Activated CD4-positive, alpha-beta T cell treated with anti-CD3 and anti-CD28 coated beads for 36 hours (primary cell): ENCODE measurements at regions of chr1 and their contacts with region 1.

Region 1: DNA sequence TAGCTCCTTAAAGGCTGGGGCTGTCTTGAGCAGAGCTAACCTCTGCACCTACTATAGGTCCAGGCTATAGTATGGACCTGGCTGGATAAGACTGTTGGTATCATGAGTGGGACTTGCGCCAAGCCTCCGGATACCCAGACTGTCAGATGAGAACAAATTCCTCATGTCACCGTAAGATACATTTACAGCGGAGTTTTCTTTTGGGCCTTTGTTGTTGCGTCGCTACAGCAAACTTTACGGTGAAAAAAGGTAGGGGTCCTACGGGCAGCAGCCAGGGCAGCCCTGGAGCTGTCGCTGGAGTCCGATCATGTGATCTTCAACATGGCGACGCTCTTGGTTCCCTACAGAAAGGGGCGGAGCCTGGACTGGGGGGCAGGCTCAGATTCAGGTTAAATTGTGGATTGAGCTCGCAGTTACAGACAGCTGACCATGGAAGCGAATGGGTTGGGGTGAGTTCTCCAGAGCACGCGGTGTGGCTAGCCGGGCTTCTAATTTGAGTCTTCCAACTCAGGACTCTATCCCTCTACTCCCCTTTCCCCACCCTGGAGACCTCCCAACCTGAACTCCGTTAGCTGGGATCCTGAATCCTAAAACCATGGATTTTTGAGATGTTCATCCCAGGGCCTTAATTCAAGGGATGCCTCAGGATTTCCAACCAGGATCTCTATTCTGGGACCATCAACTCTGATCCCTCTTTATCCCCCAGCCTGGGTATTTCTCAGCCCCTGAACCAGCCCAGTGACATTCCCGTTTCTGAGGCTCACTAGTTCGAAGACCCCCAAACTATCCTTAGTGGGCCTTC is at the start of gene UROD:
- DNase-seq: peak; percentile 96
- ATAC-seq: peak; percentile 80
- H3K4me3 Mint-ChIP-seq: peak within 1 kb of the TSS; percentile 74
- H3K27ac Mint-ChIP-seq: peak within 1 kb of the TSS; percentile 97
- H3K4me1 Mint-ChIP-seq: peaks cover 36% of the 10 kb centered on the region
- H3K27me3 Mint-ChIP-seq: no peaks in the 10 kb centered on the region
- total RNA-seq, gene UROD: 123 to 134 TPM

Region 2: GRCh38 chr1:44721485-44722361 is 290.3 kb before region 1 on chr1:
- CTCF ChIA-PET with region 1: no interaction called
- POLR2A ChIA-PET with region 1: interaction called, 26 read pairs
- intact Hi-C with region 1: no loop called
- DNase-seq: peak; percentile 89
- ATAC-seq: peak; percentile 85
- H3K4me3 Mint-ChIP-seq: peak overlapping the region; percentile 66
- H3K27ac Mint-ChIP-seq: peak overlapping the region; percentile 96
- H3K4me1 Mint-ChIP-seq: peaks cover 80% of the 10 kb centered on the region
- H3K27me3 Mint-ChIP-seq: no peaks in the 10 kb centered on the region

Region 3: GRCh38 chr1:44775078-44775929 is 236.7 kb before region 1 on chr1 and contains the start of gene RPS8:
- CTCF ChIA-PET with region 1: no interaction called
- POLR2A ChIA-PET with region 1: interaction called, 4 read pairs
- intact Hi-C with region 1: loop called in 1 of 2 experiments (anchors 1 kb)
- DNase-seq: peak; percentile 94
- ATAC-seq: peak; percentile 84
- H3K4me3 Mint-ChIP-seq: peak within 1 kb of the TSS; percentile 96
- H3K27ac Mint-ChIP-seq: peak within 1 kb of the TSS; percentile 100
- H3K4me1 Mint-ChIP-seq: peaks cover 33% of the 10 kb centered on the region
- H3K27me3 Mint-ChIP-seq: no peaks in the 10 kb centered on the region
- total RNA-seq, gene RPS8: 3,005 to 3,275 TPM

Region 4: DNA sequence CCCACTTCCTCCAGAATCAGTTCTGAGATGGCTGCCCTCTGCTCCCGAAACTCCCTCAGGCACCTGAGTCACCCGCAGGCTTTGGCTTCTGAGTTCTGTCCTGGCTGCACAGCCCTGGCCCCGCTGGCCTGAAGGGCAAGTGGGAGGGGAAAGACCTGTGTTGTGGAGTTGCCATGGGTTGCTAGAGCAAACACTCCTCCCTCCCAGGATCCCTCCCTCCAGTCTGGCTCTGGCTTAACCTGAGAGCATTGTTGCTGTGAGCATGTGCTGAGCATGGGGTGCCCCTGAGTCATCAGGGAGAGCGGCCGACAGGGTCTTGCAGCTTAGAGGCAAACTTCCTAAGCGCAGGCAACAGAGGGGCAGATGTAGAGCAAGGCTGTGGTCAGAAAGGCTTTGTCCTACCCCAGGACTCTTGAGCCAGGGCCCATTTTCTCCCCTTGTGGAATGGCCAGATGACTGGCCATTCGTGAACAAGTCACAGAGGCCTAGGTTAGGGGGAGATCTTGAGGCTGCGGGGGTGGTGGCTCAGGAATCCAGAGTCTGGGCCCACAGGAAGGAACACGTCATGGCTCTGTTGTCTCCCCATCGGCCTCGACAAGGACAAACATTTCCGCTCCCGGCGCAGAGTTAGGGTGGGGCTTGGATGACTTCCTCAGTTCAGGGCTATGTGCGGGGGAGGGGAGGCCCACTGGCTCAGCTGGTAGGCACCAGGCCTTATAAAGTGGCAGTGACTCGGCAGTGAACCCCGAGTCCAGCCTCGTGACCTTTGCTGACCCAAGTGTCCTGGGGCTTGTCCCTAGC is 204.6 kb before region 1 on chr1 and contains the start of gene DYNLT4:
- CTCF ChIA-PET with region 1: interaction called, 12 read pairs
- POLR2A ChIA-PET with region 1: interaction called, 6 read pairs
- intact Hi-C with region 1: no loop called
- DNase-seq: peak; percentile 94
- ATAC-seq: peak; percentile 57
- H3K4me3 Mint-ChIP-seq: peak within 1 kb of the TSS; percentile 87
- H3K27ac Mint-ChIP-seq: peak within 1 kb of the TSS; percentile 99
- H3K4me1 Mint-ChIP-seq: peaks cover 92% of the 10 kb centered on the region
- H3K27me3 Mint-ChIP-seq: no peaks in the 10 kb centered on the region
- total RNA-seq, gene DYNLT4: 0.32 TPM in 1 of 2 experiments, not detected in the other

Region 5: GRCh38 chr1:44985747-44986359 is 26.2 kb before region 1 on chr1:
- CTCF ChIA-PET with region 1: interaction called, 8 read pairs
- POLR2A ChIA-PET with region 1: interaction called, 29 read pairs
- intact Hi-C with region 1: loop called (anchors 1 to 2 kb)
- DNase-seq: no peak
- ATAC-seq: no peak
- H3K4me3 Mint-ChIP-seq: peak overlapping the region; percentile 96
- H3K27ac Mint-ChIP-seq: peak overlapping the region; percentile 87
- H3K4me1 Mint-ChIP-seq: peaks cover 22% of the 10 kb centered on the region
- H3K27me3 Mint-ChIP-seq: no peaks in the 10 kb centered on the region

Region 6: DNA sequence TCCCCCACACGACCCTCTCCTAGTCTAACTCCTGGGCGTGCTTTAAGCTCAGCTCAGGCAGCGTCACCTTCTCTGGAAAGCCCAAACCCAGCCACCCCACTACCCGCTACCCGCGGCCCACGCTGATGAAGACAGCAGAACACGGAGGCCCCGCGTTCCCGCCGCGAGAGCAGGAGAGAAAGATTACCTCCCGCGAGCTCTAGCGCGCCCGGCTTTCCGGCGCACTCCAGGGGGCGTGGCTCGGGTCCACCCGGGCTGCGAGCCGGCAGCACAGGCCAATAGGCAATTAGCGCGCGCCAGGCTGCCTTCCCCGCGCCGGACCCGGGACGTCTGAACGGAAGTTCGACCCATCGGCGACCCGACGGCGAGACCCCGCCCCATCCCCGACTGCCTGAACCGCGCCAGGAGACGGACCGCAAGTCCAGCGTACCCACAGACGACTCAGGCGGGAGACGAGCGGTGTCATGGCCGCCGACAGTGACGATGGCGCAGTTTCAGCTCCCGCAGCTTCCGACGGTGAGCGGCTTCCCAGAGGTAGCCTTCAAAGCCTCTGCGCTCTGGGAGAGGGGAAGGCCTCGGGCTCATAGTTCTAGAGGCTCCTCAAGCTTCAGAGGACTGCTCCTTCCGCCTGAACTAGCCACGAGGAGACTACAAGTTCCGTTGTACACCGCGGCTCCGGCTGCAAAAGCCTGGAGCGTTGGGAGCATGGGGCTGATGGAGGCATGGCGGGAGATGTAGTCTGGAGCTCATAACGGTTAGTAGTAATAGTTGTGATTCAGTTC is 327.9 kb after region 1 on chr1 and contains the starts of genes MUTYH and TOE1:
- CTCF ChIA-PET with region 1: interaction called, 30 read pairs
- POLR2A ChIA-PET with region 1: interaction called, 34 read pairs
- intact Hi-C with region 1: loop called (anchors 1 kb)
- DNase-seq: peak; percentile 98
- ATAC-seq: peak; percentile 86
- H3K4me3 Mint-ChIP-seq: peak within 1 kb of the TSS; percentile 100
- H3K27ac Mint-ChIP-seq: peak within 1 kb of the TSS; percentile 100
- H3K4me1 Mint-ChIP-seq: peaks cover 27% of the 10 kb centered on the region
- H3K27me3 Mint-ChIP-seq: no peaks in the 10 kb centered on the region
- total RNA-seq, gene MUTYH: 48.6 to 53.7 TPM
- total RNA-seq, gene TOE1: 29.8 to 42.3 TPM

Region 7: GRCh38 chr1:45365051-45365450 is 353.0 kb after region 1 on chr1:
- CTCF ChIA-PET with region 1: no interaction called
- POLR2A ChIA-PET with region 1: no interaction called
- intact Hi-C with region 1: no loop called
- DNase-seq: no peak
- ATAC-seq: no peak
- H3K4me3 Mint-ChIP-seq: no peak overlapping the region
- H3K27ac Mint-ChIP-seq: no peak overlapping the region
- H3K4me1 Mint-ChIP-seq: peaks cover 10% of the 10 kb centered on the region
- H3K27me3 Mint-ChIP-seq: no peaks in the 10 kb centered on the region

Region 8: GRCh38 chr1:46247436-46248121 is 1235.5 kb after region 1 on chr1 and contains the start of gene RAD54L:
- CTCF ChIA-PET with region 1: no interaction called
- POLR2A ChIA-PET with region 1: no interaction called
- intact Hi-C with region 1: loop called in 1 of 2 experiments (anchors 5 kb)
- DNase-seq: peak; percentile 99
- ATAC-seq: peak; percentile 94
- H3K4me3 Mint-ChIP-seq: peak within 1 kb of the TSS; percentile 83
- H3K27ac Mint-ChIP-seq: peak within 1 kb of the TSS; percentile 92
- H3K4me1 Mint-ChIP-seq: peaks cover 20% of the 10 kb centered on the region
- H3K27me3 Mint-ChIP-seq: no peaks in the 10 kb centered on the region
- total RNA-seq, gene RAD54L: 64.2 to 73.4 TPM